ENCODE measurements at regions of chr9 and their contacts with region 1.

Region 1: GRCh38 chr9:76393963-76394679 is at the start of gene RFK:
- DNase-seq: peak; percentile 89 to 99 (median 95)
- ATAC-seq: peak; percentile 97
- H3K4me3 ChIP-seq: peak within 1 kb of the TSS; percentile 92
- H3K4me3 Mint-ChIP-seq: peak within 1 kb of the TSS; percentile 94 to 100 (median 97)
- H3K27ac ChIP-seq: peak within 1 kb of the TSS; percentile 93
- H3K27ac Mint-ChIP-seq: peak within 1 kb of the TSS; percentile 95 to 99 (median 98)
- H3K4me1 ChIP-seq: peaks cover 10 to 13% of the 10 kb centered on the region in 2 donors
- H3K4me1 Mint-ChIP-seq: peaks cover 16 to 37% (median 33%) of the 10 kb centered on the region in 7 donors
- H3K27me3 ChIP-seq: no peaks in the 10 kb centered on the region
- H3K27me3 Mint-ChIP-seq: no peaks in the 10 kb centered on the region
- total RNA-seq, gene RFK: 6.8 to 18.6 (median 11.3) TPM

Region 2: DNA sequence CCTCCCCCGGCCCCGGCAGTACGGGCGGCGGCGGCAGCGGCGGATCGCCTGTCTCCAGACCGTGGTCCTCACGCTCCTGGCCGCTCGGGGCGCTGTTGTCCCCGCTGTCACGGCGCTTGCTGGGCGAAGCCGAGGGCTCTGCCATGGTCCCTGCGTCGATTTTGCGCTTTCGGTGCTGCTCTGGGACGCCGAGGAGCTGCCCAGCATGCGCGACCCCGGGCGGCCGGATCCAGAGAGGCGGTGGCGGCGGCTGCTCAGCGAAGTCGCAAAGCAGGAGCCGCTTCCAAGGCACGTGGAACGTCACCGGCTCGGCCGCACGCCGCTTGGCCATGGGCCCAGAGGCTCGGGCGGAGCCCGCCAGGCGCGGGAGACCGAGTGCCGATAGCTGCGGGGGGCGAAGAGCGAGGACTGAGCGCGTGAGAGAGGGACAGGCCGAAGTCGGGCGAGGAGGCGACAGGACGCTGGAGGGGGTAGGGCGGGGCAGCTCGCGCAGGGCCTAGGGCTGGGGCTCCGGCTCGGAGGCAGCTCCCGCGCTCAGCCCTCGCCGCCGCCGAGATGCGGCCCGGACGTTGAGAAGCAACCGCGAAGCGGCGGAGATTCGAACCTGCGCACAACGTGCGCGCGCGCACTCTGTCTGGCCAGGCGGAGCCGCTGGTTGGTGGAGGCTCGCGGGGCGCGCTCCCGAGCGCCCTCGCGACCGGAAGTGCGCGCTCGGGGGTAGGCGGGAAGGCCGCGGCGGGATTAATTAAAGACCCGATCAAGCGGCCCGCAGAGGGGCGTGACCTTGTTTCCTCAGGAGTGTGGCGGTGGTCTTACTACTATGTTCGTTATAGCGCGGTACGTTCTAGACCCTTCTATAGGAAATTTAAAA is 1441.6 kb before region 1 on chr9 and contains the start of gene C9orf40:
- CTCF ChIA-PET with region 1: no interaction called
- POLR2A ChIA-PET with region 1: interaction called, 8 read pairs
- intact Hi-C with region 1: loop called (anchors 2 to 5 kb)
- DNase-seq: peak; percentile 80 to 92 (median 88)
- ATAC-seq: peak; percentile 93
- H3K4me3 ChIP-seq: peak within 1 kb of the TSS; percentile 89
- H3K4me3 Mint-ChIP-seq: peak within 1 kb of the TSS; percentile 87 to 99 (median 97)
- H3K27ac ChIP-seq: peak within 1 kb of the TSS; percentile 86
- H3K27ac Mint-ChIP-seq: peak within 1 kb of the TSS; percentile 89 to 97 (median 95)
- H3K4me1 ChIP-seq: peaks cover 0 to 7% of the 10 kb centered on the region in 2 donors
- H3K4me1 Mint-ChIP-seq: peaks cover 0 to 46% (median 30%) of the 10 kb centered on the region in 7 donors
- H3K27me3 ChIP-seq: no peaks in the 10 kb centered on the region
- H3K27me3 Mint-ChIP-seq: no peaks in the 10 kb centered on the region
- total RNA-seq, gene C9orf40: 1.8 to 13.6 (median 6.6) TPM

Region 3: GRCh38 chr9:75148561-75148960 is 1245.6 kb before region 1 on chr9:
- CTCF ChIA-PET with region 1: no interaction called
- POLR2A ChIA-PET with region 1: no interaction called
- intact Hi-C with region 1: loop called in 1 of 2 experiments (anchors 10 kb)
- DNase-seq: peak in 1 of 9 donors; percentile 32
- ATAC-seq: no peak
- H3K4me3 ChIP-seq: peak overlapping the region; percentile 5
- H3K4me3 Mint-ChIP-seq: peak overlapping the region in 9 of 10 donors; percentile 20 to 88 (median 82)
- H3K27ac ChIP-seq: peak overlapping the region; percentile 47
- H3K27ac Mint-ChIP-seq: peak overlapping the region; percentile 81 to 97 (median 86)
- H3K4me1 ChIP-seq: peaks cover 66 to 69% of the 10 kb centered on the region in 2 donors
- H3K4me1 Mint-ChIP-seq: peaks cover 47 to 96% (median 86%) of the 10 kb centered on the region in 7 donors
- H3K27me3 ChIP-seq: no peaks in the 10 kb centered on the region
- H3K27me3 Mint-ChIP-seq: no peaks in the 10 kb centered on the region

Region 4: GRCh38 chr9:76023715-76024195 is 370.4 kb before region 1 on chr9:
- CTCF ChIA-PET with region 1: no interaction called
- POLR2A ChIA-PET with region 1: no interaction called
- intact Hi-C with region 1: loop called (anchors 2 to 5 kb)
- DNase-seq: peak in 7 of 9 donors; percentile 69 to 87 (median 81)
- ATAC-seq: peak; percentile 93
- H3K4me3 ChIP-seq: peak overlapping the region; percentile 38
- H3K4me3 Mint-ChIP-seq: peak overlapping the region; percentile 68 to 86 (median 80)
- H3K27ac ChIP-seq: peak overlapping the region; percentile 76
- H3K27ac Mint-ChIP-seq: peak overlapping the region; percentile 77 to 99 (median 96)
- H3K4me1 ChIP-seq: peaks cover 10 to 96% of the 10 kb centered on the region in 2 donors
- H3K4me1 Mint-ChIP-seq: peaks cover 59 to 100% (median 98%) of the 10 kb centered on the region in 7 donors
- H3K27me3 ChIP-seq: no peaks in the 10 kb centered on the region
- H3K27me3 Mint-ChIP-seq: no peaks in the 10 kb centered on the region

Region 5: GRCh38 chr9:76458903-76459690 is 65.0 kb after region 1 on chr9 and contains the start of gene GCNT1:
- CTCF ChIA-PET with region 1: no interaction called
- POLR2A ChIA-PET with region 1: interaction called, 6 read pairs
- intact Hi-C with region 1: loop called in 1 of 2 experiments (anchors 1 kb)
- DNase-seq: peak; percentile 78 to 98 (median 86)
- ATAC-seq: peak; percentile 98
- H3K4me3 ChIP-seq: peak within 1 kb of the TSS; percentile 92
- H3K4me3 Mint-ChIP-seq: peak within 1 kb of the TSS; percentile 81 to 96 (median 92)
- H3K27ac ChIP-seq: no peak within 1 kb of the TSS
- H3K27ac Mint-ChIP-seq: peak within 1 kb of the TSS in 8 of 9 donors; percentile 7 to 81 (median 61)
- H3K4me1 ChIP-seq: peaks cover 3 to 11% of the 10 kb centered on the region in 2 donors
- H3K4me1 Mint-ChIP-seq: peaks cover 16 to 34% (median 20%) of the 10 kb centered on the region in 7 donors
- H3K27me3 ChIP-seq: no peaks in the 10 kb centered on the region
- H3K27me3 Mint-ChIP-seq: peaks cover 0 to 3% (median 0%) of the 10 kb centered on the region in 5 donors
- total RNA-seq, gene GCNT1: 1.4 to 8.9 (median 1.7) TPM

Region 6: GRCh38 chr9:76658535-76659231 is 264.6 kb after region 1 on chr9:
- CTCF ChIA-PET with region 1: no interaction called
- POLR2A ChIA-PET with region 1: no interaction called
- intact Hi-C with region 1: loop called (anchors 2 kb)
- DNase-seq: peak in 4 of 9 donors; percentile 21 to 44 (median 25)
- ATAC-seq: peak; percentile 86
- H3K4me3 ChIP-seq: no peak overlapping the region
- H3K4me3 Mint-ChIP-seq: no peak overlapping the region
- H3K27ac ChIP-seq: no peak overlapping the region
- H3K27ac Mint-ChIP-seq: no peak overlapping the region
- H3K4me1 ChIP-seq: peaks cover 0 to 13% of the 10 kb centered on the region in 2 donors
- H3K4me1 Mint-ChIP-seq: peaks cover 0 to 52% (median 12%) of the 10 kb centered on the region in 7 donors
- H3K27me3 ChIP-seq: no peaks in the 10 kb centered on the region
- H3K27me3 Mint-ChIP-seq: peaks cover 0 to 18% (median 0%) of the 10 kb centered on the region in 5 donors

Region 7: GRCh38 chr9:77149879-77150278 is 755.8 kb after region 1 on chr9:
- CTCF ChIA-PET with region 1: no interaction called
- POLR2A ChIA-PET with region 1: no interaction called
- intact Hi-C with region 1: loop called in 1 of 2 experiments (anchors 1 kb)
- DNase-seq: no peak
- ATAC-seq: no peak
- H3K4me3 ChIP-seq: no peak overlapping the region
- H3K4me3 Mint-ChIP-seq: no peak overlapping the region
- H3K27ac ChIP-seq: no peak overlapping the region
- H3K27ac Mint-ChIP-seq: no peak overlapping the region
- H3K4me1 ChIP-seq: no peaks in the 10 kb centered on the region
- H3K4me1 Mint-ChIP-seq: no peaks in the 10 kb centered on the region
- H3K27me3 ChIP-seq: no peaks in the 10 kb centered on the region
- H3K27me3 Mint-ChIP-seq: peaks cover 10 to 24% (median 18%) of the 10 kb centered on the region in 5 donors